ENCODE measurements at regions of chr12 and their contacts with region 1.

Region 1: GRCh38 chr12:80709811-80710726 is 2.6 kb downstream of the MYF6 start:
- DNase-seq: peak in 1 of 2 donors; percentile 40
- ATAC-seq: peak in 3 of 4 donors; percentile 54 to 56 (median 55)
- H3K4me3 ChIP-seq: peak overlapping the region; percentile 76
- H3K27ac ChIP-seq: peak overlapping the region; percentile 93
- H3K4me1 ChIP-seq: peaks cover 15% of the 10 kb centered on the region
- H3K27me3 ChIP-seq: no peaks in the 10 kb centered on the region
- CTCF ChIP-seq: peak; percentile 78

Region 2: DNA sequence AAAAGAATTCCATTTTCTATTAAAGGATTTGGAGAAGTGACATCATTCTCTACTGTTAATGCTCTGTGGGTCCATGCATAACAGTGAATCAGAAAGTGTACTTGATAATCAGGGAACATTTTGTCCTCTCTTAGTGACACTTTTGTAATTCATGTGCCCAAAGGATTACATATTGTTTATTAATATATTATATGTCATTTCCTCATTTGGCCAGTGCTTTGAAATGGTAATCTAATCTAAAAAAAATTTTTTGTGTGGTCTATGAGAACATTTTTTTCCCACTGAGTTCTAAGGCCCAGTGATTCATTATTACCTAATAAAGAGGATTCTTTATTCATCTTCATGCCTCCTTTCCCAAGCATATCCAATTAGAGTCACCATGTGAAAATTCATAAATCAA is 82.3 kb before region 1 on chr12:
- intact Hi-C with region 1: loop called (anchors 5 kb)
- DNase-seq: no peak
- ATAC-seq: peak; percentile 82 to 94 (median 94)
- H3K4me3 ChIP-seq: peak overlapping the region; percentile 12
- H3K27ac ChIP-seq: peak overlapping the region; percentile 70
- H3K4me1 ChIP-seq: peaks cover 27% of the 10 kb centered on the region
- H3K27me3 ChIP-seq: no peaks in the 10 kb centered on the region
- CTCF ChIP-seq: no peak

Region 3: DNA sequence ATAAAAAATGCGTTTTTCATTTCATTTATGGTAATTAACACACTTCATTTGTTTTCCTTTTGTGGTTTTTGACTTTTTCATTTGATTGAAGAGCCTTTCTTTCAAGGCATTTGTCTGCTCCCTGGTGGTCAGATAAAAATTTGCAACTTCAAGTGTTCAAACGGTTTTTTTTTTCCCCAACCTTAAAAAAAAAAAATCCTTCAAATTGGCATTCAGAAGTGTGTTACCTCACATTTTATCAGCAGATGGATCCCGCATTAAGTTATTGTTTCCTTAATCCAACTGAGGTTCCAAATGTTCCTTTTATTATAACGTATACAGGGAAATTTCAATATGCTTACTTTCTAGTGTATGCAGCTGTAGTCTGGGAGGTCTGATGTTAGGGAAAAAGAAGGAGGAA is 53.8 kb after region 1 on chr12:
- intact Hi-C with region 1: loop called in 1 of 2 experiments (anchors 5 kb)
- DNase-seq: no peak
- ATAC-seq: peak in 1 of 4 donors; percentile 69
- H3K4me3 ChIP-seq: no peak overlapping the region
- H3K27ac ChIP-seq: no peak overlapping the region
- H3K4me1 ChIP-seq: peaks cover 3% of the 10 kb centered on the region
- H3K27me3 ChIP-seq: no peaks in the 10 kb centered on the region
- CTCF ChIP-seq: peak; percentile 72